ENCODE measurements at regions of chr7 and their contacts with region 1.

Region 1: DNA sequence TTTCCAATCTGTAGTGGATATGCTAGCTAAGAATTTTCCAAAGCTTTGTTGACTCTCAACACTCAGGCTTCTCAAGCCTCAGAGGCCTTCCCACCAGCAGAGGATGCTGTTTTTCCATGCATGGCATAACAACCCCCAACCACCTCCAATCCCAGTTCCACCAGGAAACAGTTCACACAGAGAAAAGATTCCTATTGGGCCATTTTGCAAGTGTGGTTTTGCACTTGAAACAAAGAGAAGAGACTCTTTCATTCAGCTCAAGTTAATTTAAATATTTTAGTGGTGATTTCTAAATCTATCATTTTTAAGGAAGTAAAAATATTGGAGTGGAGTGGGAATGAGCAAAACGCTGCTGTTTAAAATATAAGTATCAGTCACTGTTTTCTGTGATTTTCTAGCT is 105.6 kb upstream of the COL1A2 start:
- DNase-seq: peak in 4 of 5 donors; percentile 52 to 61 (median 55)
- ATAC-seq: peak in 3 of 4 donors; percentile 82 to 85 (median 83)
- H3K4me3 ChIP-seq: no peak overlapping the region
- H3K27ac ChIP-seq: no peak overlapping the region
- H3K4me1 ChIP-seq: no peaks in the 10 kb centered on the region
- H3K27me3 ChIP-seq: no peaks in the 10 kb centered on the region
- CTCF ChIP-seq: peak; percentile 58 to 90 (median 81)
- POLR2A ChIP-seq: no peak

Region 2: DNA sequence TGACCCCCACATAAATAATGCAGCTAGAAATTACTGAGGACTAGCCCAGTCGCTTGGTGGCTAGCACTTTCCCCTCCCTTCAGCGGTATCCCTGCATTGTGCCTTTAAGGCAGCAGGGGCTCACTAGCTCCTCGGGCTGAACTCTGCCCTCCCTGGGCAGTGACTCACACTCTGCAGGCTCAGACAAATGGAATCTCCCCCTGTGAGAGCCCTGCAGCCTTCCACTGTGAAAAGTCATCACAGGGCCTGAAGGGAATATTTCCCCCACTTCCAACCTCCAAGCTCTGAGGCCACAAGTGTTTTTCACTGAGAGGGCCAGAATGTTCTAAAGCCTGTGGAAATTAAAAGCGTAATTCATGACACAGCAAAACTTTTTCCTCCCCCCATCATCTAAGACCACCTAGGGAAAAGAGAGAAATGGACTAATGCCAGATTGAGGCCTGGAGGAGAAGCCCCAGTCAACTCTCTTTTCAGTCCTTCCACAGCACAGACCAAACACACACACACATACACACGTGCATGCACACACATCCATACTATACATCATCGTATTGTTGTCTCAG is 12.0 kb after region 1 on chr7:
- intact Hi-C with region 1: no loop called
- DNase-seq: peak; percentile 71 to 83 (median 81)
- ATAC-seq: peak; percentile 74 to 91 (median 86)
- H3K4me3 ChIP-seq: no peak overlapping the region
- H3K27ac ChIP-seq: peak overlapping the region; percentile 6 to 87 (median 65)
- H3K4me1 ChIP-seq: peaks cover 0 to 52% (median 16%) of the 10 kb centered on the region in 12 donors
- H3K27me3 ChIP-seq: no peaks in the 10 kb centered on the region
- CTCF ChIP-seq: peak in 2 of 12 donors; percentile 11 to 18
- POLR2A ChIP-seq: peak in 1 of 2 donors; percentile 20

Region 3: GRCh38 chr7:94395141-94396036 is 106.3 kb after region 1 on chr7:
- intact Hi-C with region 1: loop called in 4 of 10 experiments (anchors 2 to 10 kb)
- DNase-seq: peak in 3 of 5 donors; percentile 41 to 48 (median 41)
- ATAC-seq: peak; percentile 56 to 78 (median 70)
- H3K4me3 ChIP-seq: peak overlapping the region; percentile 26 to 68 (median 61)
- H3K27ac ChIP-seq: peak overlapping the region; percentile 68 to 92 (median 84)
- H3K4me1 ChIP-seq: peaks cover 0 to 35% (median 10%) of the 10 kb centered on the region in 12 donors
- H3K27me3 ChIP-seq: peaks cover 0 to 11% (median 2%) of the 10 kb centered on the region in 9 donors
- CTCF ChIP-seq: peak; percentile 58 to 85 (median 74)
- POLR2A ChIP-seq: no peak

Region 4: DNA sequence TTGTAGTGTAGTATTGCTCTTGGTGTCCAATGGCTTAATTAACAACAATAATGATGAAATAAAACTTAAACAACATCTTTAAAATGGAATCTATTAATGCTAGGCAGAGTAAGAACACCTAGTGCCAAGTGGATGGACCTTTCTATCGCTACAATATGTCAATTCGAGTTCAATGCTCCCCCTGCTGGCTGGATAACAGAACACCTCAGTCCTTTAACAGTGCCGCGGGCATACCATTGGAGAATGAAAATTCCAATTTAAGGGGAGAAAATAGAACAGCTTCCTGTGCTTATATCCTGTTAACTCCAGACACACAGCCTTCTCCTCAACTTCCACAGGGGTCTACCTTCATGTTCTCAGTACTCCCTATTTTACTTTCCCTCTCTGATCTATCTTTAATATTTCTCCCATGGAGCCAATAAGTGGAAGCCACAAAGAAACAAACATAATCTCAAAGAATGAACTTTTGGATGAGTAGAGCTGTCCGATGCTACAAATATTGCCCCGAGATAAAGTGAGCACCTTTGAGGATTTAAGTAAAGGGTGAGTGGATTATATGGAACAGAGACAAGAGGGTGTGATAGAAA is 147.0 kb after region 1 on chr7:
- intact Hi-C with region 1: loop called in 8 of 10 experiments (anchors 1 to 5 kb)
- DNase-seq: peak in 4 of 5 donors; percentile 56 to 65 (median 62)
- ATAC-seq: peak; percentile 65 to 77 (median 72)
- H3K4me3 ChIP-seq: no peak overlapping the region
- H3K27ac ChIP-seq: no peak overlapping the region
- H3K4me1 ChIP-seq: peaks cover 0 to 13% (median 0%) of the 10 kb centered on the region in 12 donors
- H3K27me3 ChIP-seq: peaks cover 0 to 7% (median 0%) of the 10 kb centered on the region in 9 donors
- CTCF ChIP-seq: peak; percentile 66 to 88 (median 77)
- POLR2A ChIP-seq: no peak

Region 5: DNA sequence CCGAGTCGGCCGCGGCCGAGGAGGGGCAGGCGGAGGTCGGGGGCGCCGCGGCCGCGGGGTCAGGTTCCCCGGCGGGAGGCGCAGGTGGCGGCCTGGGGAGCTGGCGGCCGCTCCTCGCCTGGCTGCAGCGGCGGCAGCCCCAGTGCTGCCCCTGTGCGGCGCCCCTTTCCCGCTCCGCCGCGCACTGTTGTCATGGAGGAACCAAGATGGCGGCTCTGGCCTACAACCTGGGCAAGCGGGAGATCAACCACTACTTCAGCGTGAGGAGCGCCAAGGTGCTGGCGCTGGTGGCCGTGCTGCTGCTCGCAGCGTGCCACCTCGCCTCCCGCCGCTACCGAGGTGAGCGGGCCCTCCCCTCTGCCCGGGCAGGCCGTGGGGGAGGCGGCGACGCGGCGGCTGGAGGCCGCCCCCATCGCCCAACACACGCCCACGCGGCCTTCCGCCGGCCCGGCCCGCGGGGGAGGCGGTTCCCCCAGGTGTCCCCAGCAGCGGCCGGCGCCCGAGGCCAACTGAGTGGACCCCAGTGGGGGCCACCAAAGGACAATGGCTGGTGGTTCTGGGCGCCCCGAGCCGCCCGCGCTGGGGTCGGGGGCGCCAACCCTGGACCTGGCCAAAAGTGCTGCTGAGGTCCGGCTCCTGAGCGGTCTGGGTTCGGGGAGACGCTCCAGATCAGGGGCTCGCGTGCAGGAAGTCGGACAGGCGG is 221.0 kb after region 1 on chr7:
- intact Hi-C with region 1: loop called in 1 of 10 experiments (anchors 10 kb)
- DNase-seq: peak; percentile 66 to 83 (median 72)
- ATAC-seq: peak; percentile 66 to 91 (median 88)
- H3K4me3 ChIP-seq: peak overlapping the region; percentile 78 to 98 (median 90)
- H3K27ac ChIP-seq: peak overlapping the region; percentile 89 to 98 (median 93)
- H3K4me1 ChIP-seq: peaks cover 0 to 49% (median 26%) of the 10 kb centered on the region in 12 donors
- H3K27me3 ChIP-seq: no peaks in the 10 kb centered on the region
- CTCF ChIP-seq: peak in 9 of 12 donors; percentile 9 to 52 (median 28)
- POLR2A ChIP-seq: peak in 1 of 2 donors; percentile 41

Region 6: DNA sequence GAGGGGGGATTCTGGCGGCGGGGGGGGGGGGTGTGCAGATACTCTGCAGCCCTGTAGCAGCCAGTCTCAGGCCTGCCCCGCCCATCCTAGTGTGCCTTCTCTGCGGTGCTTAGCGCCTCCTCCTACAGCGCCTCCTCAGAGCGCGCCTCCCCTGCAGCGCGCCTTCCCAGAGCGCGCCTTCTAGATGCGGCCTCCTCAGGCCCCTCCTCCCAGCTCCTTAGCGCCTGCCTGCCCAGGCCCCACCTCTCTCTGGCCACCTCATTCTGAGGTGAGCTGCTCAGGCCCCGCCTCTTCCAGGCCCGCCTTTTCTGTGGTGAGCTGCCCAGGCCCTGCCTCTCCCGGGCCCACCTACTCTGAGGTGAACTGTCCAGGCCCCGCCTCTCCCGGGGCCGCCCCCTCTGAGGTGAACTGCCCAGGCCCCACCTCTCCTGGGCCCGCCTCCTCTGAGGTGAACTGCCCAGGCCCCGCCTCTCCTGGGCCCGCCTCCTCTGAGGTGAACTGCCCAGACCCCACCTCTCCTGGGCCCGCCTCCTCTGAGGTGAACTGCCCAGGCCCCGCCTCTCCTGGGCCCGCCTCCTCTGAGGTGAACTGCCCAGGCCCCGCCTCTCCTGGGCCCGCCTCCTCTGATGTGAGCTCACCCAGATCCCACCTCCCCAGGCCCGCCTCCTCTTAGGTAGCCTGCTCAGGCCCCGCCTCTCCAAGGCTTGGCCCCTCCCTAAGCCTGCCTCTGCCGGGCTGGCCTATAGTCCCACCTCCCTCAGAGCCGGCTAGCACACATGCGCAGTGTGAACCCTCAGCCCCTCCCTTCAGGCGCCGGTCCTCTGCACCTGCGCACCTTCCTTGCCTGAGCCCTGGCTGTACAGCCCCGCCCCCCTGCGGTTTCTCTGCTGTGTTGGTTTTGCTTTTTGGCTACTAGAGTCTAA is 369.0 kb after region 1 on chr7:
- intact Hi-C with region 1: loop called in 1 of 10 experiments (anchors 10 kb)
- DNase-seq: peak; percentile 86 to 94 (median 94)
- ATAC-seq: peak; percentile 94 to 97 (median 95)
- H3K4me3 ChIP-seq: peak overlapping the region; percentile 23 to 79 (median 72)
- H3K27ac ChIP-seq: peak overlapping the region in 7 of 12 donors; percentile 11 to 78 (median 44)
- H3K4me1 ChIP-seq: peaks cover 0 to 30% (median 5%) of the 10 kb centered on the region in 12 donors
- H3K27me3 ChIP-seq: peaks cover 0 to 31% (median 4%) of the 10 kb centered on the region in 9 donors
- CTCF ChIP-seq: no peak
- POLR2A ChIP-seq: peak in 1 of 2 donors; percentile 15

Region 7: GRCh38 chr7:95190515-95190914 is 901.4 kb after region 1 on chr7:
- intact Hi-C with region 1: no loop called
- DNase-seq: no peak
- ATAC-seq: no peak
- H3K4me3 ChIP-seq: no peak overlapping the region
- H3K27ac ChIP-seq: no peak overlapping the region
- H3K4me1 ChIP-seq: no peaks in the 10 kb centered on the region
- H3K27me3 ChIP-seq: no peaks in the 10 kb centered on the region
- CTCF ChIP-seq: no peak
- POLR2A ChIP-seq: no peak

Region 8: DNA sequence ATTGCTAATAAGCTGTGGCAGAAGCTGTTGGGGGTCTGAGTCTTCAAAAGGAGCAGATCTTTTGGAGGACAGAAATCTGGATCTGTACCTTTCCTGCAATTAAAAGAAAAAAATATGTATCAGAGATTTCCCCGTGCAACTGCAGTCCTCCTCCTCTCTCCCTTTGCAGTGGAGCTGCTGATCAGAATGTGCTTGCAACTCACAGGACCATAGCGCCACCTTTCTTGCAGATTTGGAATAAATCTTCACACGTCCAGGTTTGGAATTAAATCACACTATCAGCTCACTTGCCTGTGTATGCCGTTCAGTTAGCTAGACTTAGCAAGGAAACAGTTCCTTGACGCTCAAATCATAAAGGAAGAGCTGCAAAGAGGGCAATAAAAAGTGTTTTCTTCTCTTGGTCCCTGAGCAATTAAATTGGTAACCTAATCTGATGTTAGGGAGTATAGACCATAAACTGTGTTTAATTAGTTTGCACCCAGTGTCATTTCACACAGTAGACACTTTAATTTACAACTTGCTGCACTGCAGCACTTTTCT is 957.8 kb after region 1 on chr7:
- intact Hi-C with region 1: loop called in 2 of 10 experiments (anchors 5 to 10 kb)
- DNase-seq: peak in 4 of 5 donors; percentile 25 to 32 (median 29)
- ATAC-seq: peak; percentile 55 to 85 (median 73)
- H3K4me3 ChIP-seq: peak overlapping the region in 4 of 12 donors; percentile 9 to 22 (median 22)
- H3K27ac ChIP-seq: no peak overlapping the region
- H3K4me1 ChIP-seq: peaks cover 0 to 6% (median 0%) of the 10 kb centered on the region in 12 donors
- H3K27me3 ChIP-seq: no peaks in the 10 kb centered on the region
- CTCF ChIP-seq: peak; percentile 36 to 76 (median 62)
- POLR2A ChIP-seq: no peak

Measured in heart left ventricle (tissue), 16 donors.